ENCODE measurements at regions of chr2 and their contacts with region 1.

Region 1: GRCh38 chr2:27890146-27890923 is at the starts of genes BABAM2 and RBKS:
- DNase-seq: peak; percentile 94
- ATAC-seq: peak; percentile 87
- H3K4me3 Mint-ChIP-seq: peak within 1 kb of the TSS; percentile 99
- H3K27ac Mint-ChIP-seq: peak within 1 kb of the TSS; percentile 99
- H3K4me1 Mint-ChIP-seq: peaks cover 58% of the 10 kb centered on the region
- H3K27me3 Mint-ChIP-seq: no peaks in the 10 kb centered on the region
- total RNA-seq, gene BABAM2: 58.4 to 81.1 TPM
- total RNA-seq, gene RBKS: 4.6 to 6.4 TPM

Region 2: DNA sequence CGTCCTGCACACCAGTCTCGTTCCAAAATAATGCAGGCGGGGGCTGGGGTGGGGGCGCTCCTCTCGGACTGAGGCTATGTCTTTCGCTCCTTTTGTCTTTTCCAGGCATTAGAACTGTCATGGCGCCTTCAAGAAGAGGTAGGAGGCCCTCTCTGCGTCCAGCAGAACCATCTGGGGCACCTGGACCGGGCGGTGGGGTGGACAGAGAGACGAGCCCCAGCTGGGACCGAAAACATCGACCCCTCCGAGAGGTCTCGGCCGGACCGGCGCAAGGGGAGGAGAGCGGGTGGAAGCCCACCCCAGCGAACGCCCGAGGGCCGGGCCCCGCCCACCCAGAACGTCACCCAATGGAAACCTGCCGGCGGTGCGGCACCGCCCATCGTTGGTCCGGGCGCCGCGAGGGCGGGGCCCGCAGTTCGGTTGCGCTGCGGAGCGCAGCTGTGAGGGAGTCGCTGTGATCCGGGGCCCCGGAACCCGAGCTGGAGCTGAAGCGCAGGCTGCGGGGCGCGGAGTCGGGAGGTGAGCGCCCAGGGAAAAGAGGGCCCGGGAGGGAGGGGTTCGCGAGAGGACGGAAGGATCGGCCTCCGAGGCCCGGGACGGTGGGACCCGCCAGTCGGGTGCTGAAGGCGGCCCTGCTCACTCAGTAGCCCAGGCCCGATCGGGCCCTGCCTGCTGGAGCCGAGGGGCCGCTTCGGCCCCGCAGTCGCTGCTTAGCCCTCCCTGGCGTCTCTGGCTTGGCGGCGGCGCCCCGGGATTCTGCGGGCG is 461.9 kb before region 1 on chr2 and contains the start of gene NRBP1:
- CTCF ChIA-PET with region 1: no interaction called
- POLR2A ChIA-PET with region 1: no interaction called
- intact Hi-C with region 1: loop called in 1 of 2 experiments (anchors 2 kb)
- DNase-seq: peak; percentile 97
- ATAC-seq: peak; percentile 85
- H3K4me3 Mint-ChIP-seq: peak within 1 kb of the TSS; percentile 100
- H3K27ac Mint-ChIP-seq: peak within 1 kb of the TSS; percentile 98
- H3K4me1 Mint-ChIP-seq: peaks cover 37% of the 10 kb centered on the region
- H3K27me3 Mint-ChIP-seq: no peaks in the 10 kb centered on the region
- total RNA-seq, gene NRBP1: 74.3 to 74.4 TPM

Region 3: DNA sequence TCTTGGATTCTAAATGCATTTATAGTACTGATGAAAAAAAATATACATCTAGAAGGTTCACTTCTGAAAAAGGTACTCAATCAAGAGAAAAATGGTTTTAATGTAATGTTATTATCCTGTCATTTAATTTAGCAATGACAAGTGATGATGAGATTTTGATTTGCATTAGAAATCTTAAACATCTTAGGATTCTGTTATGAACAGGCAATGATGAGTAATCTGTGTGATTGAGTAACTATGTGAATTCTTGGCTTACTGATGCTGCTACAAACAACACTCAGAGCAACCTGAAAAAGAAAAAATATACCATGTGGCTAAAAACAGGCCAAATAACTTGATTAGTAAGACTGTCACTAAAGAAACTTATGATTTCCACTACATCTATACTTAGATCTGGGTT is 30.2 kb before region 1 on chr2:
- CTCF ChIA-PET with region 1: no interaction called
- POLR2A ChIA-PET with region 1: interaction called, 3 read pairs
- intact Hi-C with region 1: loop called in 1 of 2 experiments (anchors 2 kb)
- DNase-seq: no peak
- ATAC-seq: peak; percentile 76
- H3K4me3 Mint-ChIP-seq: no peak overlapping the region
- H3K27ac Mint-ChIP-seq: peak overlapping the region; percentile 13
- H3K4me1 Mint-ChIP-seq: peaks cover 42% of the 10 kb centered on the region
- H3K27me3 Mint-ChIP-seq: no peaks in the 10 kb centered on the region

Region 4: DNA sequence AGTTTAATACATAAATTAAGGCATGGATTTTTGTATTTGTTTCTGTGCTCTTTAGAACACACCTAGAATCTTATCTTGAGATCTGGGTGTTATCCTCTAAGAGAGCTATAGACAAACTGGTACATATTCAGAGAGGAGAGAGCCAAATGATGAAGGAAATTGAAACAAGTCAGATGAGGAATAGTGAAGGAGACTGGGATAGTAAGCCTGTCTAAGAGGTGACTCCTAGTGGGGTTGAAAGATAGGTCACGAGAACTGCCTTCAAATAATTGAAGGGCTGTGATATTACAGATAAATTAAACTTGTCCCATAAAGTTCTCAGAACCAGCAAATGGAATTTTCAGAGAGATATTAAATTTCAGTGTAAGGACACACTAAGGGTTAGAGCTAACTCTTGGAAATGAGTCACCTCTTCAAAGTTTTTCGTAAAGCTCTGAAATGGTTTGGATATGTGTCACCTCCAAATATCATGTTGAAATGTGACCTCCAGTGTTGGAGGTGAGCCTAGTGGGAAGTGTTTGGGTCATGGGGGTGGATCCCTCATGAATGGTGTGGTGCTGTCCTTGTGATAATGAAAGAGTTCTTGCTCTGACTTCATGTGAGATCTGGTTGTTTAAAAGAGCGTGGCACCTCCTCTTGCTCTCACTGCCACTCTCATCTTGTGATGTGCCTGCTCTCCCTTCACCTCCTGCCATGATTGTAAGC is 87.4 kb after region 1 on chr2:
- CTCF ChIA-PET with region 1: interaction called, 4 read pairs
- POLR2A ChIA-PET with region 1: no interaction called
- intact Hi-C with region 1: loop called in 1 of 2 experiments (anchors 1 kb)
- DNase-seq: peak; percentile 67
- ATAC-seq: peak; percentile 90
- H3K4me3 Mint-ChIP-seq: no peak overlapping the region
- H3K27ac Mint-ChIP-seq: peak overlapping the region; percentile 79
- H3K4me1 Mint-ChIP-seq: peaks cover 46% of the 10 kb centered on the region
- H3K27me3 Mint-ChIP-seq: no peaks in the 10 kb centered on the region

Region 5: GRCh38 chr2:28445448-28446258 is 555.3 kb after region 1 on chr2:
- CTCF ChIA-PET with region 1: no interaction called
- POLR2A ChIA-PET with region 1: interaction called, 4 read pairs
- intact Hi-C with region 1: loop called (anchors 2 to 5 kb)
- DNase-seq: peak; percentile 85
- ATAC-seq: peak; percentile 70
- H3K4me3 Mint-ChIP-seq: peak overlapping the region; percentile 53
- H3K27ac Mint-ChIP-seq: peak overlapping the region; percentile 97
- H3K4me1 Mint-ChIP-seq: peaks cover 81% of the 10 kb centered on the region
- H3K27me3 Mint-ChIP-seq: no peaks in the 10 kb centered on the region

Region 6: DNA sequence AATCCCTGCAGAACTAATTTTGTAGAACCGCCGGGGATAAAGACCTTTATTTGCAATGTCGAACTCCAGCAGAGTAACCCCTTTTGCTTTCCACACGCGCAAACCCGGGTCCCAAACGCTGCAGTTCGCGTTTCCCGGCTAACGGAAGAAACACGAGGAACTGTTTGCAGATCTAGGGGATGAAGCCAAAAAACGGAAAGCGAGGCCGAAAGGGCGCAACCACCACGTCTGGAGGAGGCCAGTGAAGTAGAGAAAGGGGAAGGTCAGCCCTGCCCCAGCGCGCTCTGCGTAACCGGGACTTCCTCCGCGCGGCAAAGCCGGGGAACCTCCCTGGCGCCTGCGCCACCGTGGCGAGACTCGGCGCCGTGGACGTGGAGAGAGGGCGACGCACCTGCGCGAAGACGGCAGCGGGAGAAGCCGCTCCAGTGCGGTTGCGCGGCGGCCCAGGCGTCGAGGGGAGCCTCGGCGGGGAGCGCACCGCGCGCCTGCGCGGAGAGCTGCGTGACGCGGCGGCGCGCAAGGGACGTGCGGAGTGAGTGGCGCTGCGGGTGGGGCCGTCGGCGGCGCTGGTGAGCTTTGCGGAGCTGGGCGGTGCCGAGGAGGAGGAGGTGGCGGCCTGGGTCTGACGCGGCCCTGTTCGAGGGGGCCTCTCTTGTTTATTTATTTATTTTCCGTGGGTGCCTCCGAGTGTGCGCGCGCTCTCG is 861.1 kb after region 1 on chr2 and contains the start of gene PPP1CB:
- CTCF ChIA-PET with region 1: no interaction called
- POLR2A ChIA-PET with region 1: no interaction called
- intact Hi-C with region 1: loop called in 1 of 2 experiments (anchors 2 kb)
- DNase-seq: peak; percentile 96
- ATAC-seq: peak; percentile 88
- H3K4me3 Mint-ChIP-seq: peak within 1 kb of the TSS; percentile 90
- H3K27ac Mint-ChIP-seq: peak within 1 kb of the TSS; percentile 95
- H3K4me1 Mint-ChIP-seq: peaks cover 53% of the 10 kb centered on the region
- H3K27me3 Mint-ChIP-seq: no peaks in the 10 kb centered on the region
- total RNA-seq, gene PPP1CB: 153 to 213 TPM